ENCODE measurements at regions of chr3 and their contacts with region 1.

Region 1: GRCh38 chr3:160003520-160004128 is 15.0 kb downstream of the IL12A start:
- DNase-seq: no peak
- ATAC-seq: peak; percentile 96
- H3K4me3 ChIP-seq: no peak overlapping the region
- H3K27ac ChIP-seq: no peak overlapping the region
- H3K4me1 ChIP-seq: peaks cover 6% of the 10 kb centered on the region; the same call in 1 of the 2 replicates
- H3K27me3 ChIP-seq: no peaks in the 10 kb centered on the region
- CTCF ChIP-seq: peak; percentile 65 to 75 (median 75)
- EP300 ChIP-seq: no peak
- POLR2A ChIP-seq: no peak
- RAD21 ChIP-seq: peak; percentile 81

Region 2: DNA sequence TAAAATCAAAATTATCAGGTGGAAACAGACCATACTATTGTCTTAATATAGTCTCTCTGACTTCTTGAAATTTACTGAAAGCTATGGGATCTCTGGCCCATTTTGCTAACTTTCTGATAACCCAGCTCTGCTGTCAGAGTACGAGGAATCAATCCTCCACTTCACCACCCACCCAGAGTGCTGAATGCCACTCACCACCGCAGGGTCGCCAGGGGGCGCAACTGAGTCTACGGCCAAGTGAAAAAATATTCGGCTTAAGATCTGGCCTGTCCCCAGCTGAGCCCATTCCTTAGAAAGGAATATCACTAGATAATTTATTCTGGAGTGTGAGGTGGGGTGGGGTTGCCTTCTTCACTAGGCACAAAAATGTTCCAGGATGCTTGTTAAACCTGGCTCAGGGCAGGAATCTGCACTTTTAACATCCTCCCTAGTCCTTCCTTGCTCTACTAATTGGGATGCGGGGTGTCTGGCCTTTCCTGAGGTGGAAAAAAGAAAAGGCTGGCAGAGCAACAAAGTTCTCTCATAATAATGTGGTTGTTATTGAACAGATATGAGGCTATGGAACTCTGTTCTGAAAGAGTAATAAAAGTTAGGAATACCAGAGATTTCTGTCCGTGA is 681.2 kb before region 1 on chr3:
- CTCF ChIA-PET with region 1: interaction called, 4 read pairs
- POLR2A ChIA-PET with region 1: no interaction called
- RAD21 ChIA-PET with region 1: no interaction called
- SMC1A ChIA-PET with region 1: no interaction called
- in situ Hi-C with region 1: no loop called
- intact Hi-C with region 1: loop called (anchors 5 kb)
- DNase-seq: no peak
- ATAC-seq: peak; percentile 89
- H3K4me3 ChIP-seq: no peak overlapping the region
- H3K27ac ChIP-seq: no peak overlapping the region
- H3K4me1 ChIP-seq: no peaks in the 10 kb centered on the region
- H3K27me3 ChIP-seq: no peaks in the 10 kb centered on the region
- CTCF ChIP-seq: peak; percentile 68 to 90 (median 88)
- EP300 ChIP-seq: no peak
- POLR2A ChIP-seq: no peak
- RAD21 ChIP-seq: peak; percentile 65

Region 3: DNA sequence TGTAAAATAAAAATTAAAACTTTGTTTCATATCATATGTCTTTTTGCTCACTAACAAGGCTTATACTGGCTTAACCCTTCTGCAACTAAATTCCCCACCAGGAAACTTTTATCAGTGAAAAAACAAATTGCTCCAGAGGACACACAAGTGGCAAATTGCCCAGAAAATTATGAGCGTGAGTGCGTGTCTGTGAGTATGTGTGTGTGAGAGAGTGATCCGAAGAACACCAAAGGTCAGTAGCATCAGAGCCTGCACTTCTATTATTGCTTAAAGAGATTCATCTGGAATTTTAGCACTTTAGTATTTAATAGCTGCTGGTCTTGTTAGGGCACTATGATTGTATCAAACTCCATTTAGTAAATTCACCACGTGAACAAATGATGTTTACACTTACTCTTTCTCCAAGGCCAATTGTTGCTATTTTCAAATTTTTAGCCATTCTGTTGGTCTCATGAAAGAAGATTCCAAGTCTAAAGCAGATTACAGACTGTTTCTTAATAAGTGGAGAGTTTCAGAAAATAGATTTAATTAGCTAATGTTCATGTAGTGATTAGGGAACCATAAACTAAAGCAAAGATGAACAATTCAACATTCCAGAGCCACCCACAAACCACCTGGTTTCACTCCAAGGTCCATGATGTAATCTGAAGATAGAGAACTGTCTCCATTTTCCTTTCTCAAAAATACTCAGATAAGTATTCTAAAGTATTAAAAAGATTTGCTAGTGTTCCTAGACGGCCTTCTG is 106.1 kb before region 1 on chr3:
- CTCF ChIA-PET with region 1: interaction called, 843 read pairs
- POLR2A ChIA-PET with region 1: interaction called, 3 read pairs
- RAD21 ChIA-PET with region 1: interaction called, 387 read pairs
- SMC1A ChIA-PET with region 1: interaction called, 589 read pairs
- in situ Hi-C with region 1: no loop called
- intact Hi-C with region 1: no loop called
- DNase-seq: no peak
- ATAC-seq: no peak
- H3K4me3 ChIP-seq: no peak overlapping the region
- H3K27ac ChIP-seq: no peak overlapping the region
- H3K4me1 ChIP-seq: peaks cover 9% of the 10 kb centered on the region
- H3K27me3 ChIP-seq: no peaks in the 10 kb centered on the region
- CTCF ChIP-seq: no peak
- EP300 ChIP-seq: no peak
- POLR2A ChIP-seq: no peak
- RAD21 ChIP-seq: no peak

Region 4: GRCh38 chr3:159929435-159930141 is 74.0 kb before region 1 on chr3:
- CTCF ChIA-PET with region 1: interaction called, 106 read pairs
- POLR2A ChIA-PET with region 1: no interaction called
- RAD21 ChIA-PET with region 1: interaction called, 41 read pairs
- SMC1A ChIA-PET with region 1: interaction called, 30 read pairs
- in situ Hi-C with region 1: no loop called
- intact Hi-C with region 1: loop called (anchors 1 kb)
- DNase-seq: no peak
- ATAC-seq: peak; percentile 88
- H3K4me3 ChIP-seq: no peak overlapping the region
- H3K27ac ChIP-seq: peak overlapping the region; percentile 65
- H3K4me1 ChIP-seq: peaks cover 14% of the 10 kb centered on the region
- H3K27me3 ChIP-seq: no peaks in the 10 kb centered on the region
- CTCF ChIP-seq: peak; percentile 37 to 40 (median 39); a peak in 4 of 6 replicates
- EP300 ChIP-seq: no peak
- POLR2A ChIP-seq: no peak
- RAD21 ChIP-seq: peak; percentile 63

Region 5: DNA sequence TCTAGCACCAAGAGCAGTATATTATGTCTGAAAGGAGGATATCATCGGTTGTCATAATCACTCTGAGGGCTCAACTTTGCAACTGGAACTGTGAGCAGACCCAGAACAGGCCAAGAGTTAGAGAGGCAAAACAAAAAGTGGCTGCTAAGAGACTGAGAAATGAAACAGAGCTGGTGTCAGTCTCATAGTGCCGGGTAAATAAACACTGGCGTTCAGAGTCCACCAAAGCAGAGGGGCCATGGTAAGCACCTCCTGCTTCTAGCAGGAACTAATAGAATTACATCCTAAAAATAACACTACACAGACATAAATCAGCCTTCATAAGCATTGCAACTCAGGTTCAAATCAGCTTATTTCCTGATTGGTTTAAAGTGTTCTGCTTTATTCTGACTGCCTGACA is 25.3 kb before region 1 on chr3:
- CTCF ChIA-PET with region 1: interaction called, 18 read pairs
- POLR2A ChIA-PET with region 1: no interaction called
- RAD21 ChIA-PET with region 1: interaction called, 3 read pairs
- SMC1A ChIA-PET with region 1: interaction called, 15 read pairs
- in situ Hi-C with region 1: no loop called
- intact Hi-C with region 1: no loop called
- DNase-seq: no peak
- ATAC-seq: peak; percentile 92
- H3K4me3 ChIP-seq: no peak overlapping the region
- H3K27ac ChIP-seq: no peak overlapping the region
- H3K4me1 ChIP-seq: no peaks in the 10 kb centered on the region
- H3K27me3 ChIP-seq: no peaks in the 10 kb centered on the region
- CTCF ChIP-seq: no peak
- EP300 ChIP-seq: no peak
- POLR2A ChIP-seq: no peak
- RAD21 ChIP-seq: no peak

Region 6: DNA sequence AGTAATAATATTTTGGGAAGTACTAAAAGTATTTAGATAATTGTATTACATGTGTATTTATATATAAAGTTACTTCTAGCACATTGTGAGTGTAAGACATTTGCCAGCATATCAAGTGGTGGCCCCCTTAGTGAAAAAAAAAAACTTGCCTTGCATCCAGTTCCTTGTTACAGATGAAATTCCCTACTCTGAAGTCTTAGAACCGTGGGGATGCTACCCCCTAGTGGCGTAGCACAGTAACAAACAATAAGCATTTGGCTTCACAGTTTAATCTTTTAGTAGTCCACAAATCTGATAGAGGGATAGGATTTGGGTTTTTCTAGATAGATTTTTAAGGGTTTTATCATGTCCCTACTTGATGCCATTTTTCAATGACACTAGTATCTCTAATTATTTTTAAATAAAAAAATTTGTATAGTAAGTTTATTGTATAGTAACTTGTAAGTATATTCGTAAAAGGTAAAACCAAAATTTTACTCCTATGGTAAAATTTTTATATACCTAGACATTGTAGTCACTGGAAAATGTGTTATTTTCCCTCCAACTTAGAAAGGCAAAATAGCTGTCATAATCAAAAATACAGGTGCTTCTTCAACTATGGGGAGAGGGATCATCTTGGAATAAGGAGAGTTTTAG is 410.1 kb after region 1 on chr3:
- CTCF ChIA-PET with region 1: interaction called, 18 read pairs
- POLR2A ChIA-PET with region 1: no interaction called
- RAD21 ChIA-PET with region 1: interaction called, 4 read pairs
- SMC1A ChIA-PET with region 1: interaction called, 7 read pairs
- in situ Hi-C with region 1: no loop called
- intact Hi-C with region 1: no loop called
- DNase-seq: peak; percentile 19
- ATAC-seq: peak; percentile 72
- H3K4me3 ChIP-seq: no peak overlapping the region
- H3K27ac ChIP-seq: no peak overlapping the region
- H3K4me1 ChIP-seq: no peaks in the 10 kb centered on the region
- H3K27me3 ChIP-seq: no peaks in the 10 kb centered on the region
- CTCF ChIP-seq: peak; percentile 77 to 83 (median 82)
- EP300 ChIP-seq: no peak
- POLR2A ChIP-seq: no peak
- RAD21 ChIP-seq: peak; percentile 93